ENCODE measurements at regions of chr17 and their contacts with region 1.

Region 1: DNA sequence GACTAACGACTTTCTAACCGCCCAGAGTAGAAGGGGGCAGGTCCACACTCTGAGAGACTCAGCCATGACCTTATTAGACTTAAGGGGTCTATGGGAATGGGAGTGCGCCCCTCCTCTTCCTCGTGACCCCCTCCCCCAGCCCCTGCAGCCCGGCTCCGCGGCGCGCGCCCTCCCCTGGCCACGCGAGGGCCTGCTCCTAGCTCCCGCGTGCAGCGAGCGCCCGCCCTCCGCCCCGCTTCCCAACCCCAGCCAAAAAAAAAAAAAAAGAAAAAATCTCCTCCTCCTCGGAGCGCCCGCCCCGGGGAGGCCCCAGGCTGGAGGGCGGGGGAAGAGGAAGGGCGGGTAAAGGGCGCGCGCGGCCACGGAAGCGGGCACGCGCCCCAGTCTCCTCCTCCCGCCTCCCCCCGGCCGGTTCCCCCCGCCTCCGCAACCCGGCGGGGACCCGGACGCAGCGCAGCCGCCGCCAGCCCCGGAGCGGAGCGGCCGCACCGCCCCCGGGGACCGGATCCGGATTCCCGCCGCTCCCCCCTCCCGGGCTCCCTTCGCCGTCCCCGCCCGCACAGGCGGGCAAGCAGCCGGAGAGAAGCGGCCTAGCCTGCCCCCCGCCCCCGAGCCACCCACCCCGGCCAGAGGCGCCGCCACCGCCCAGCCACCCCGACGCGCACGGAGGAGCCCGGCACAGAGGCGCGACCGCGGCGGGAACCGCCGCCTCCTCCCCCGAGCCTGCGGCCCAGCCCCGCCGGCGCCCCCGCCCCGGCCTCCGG is 949 bp downstream of the UBTF start:
- DNase-seq: peak; percentile 71 to 96 (median 87)
- ATAC-seq: peak; percentile 55
- H3K4me3 ChIP-seq: peak overlapping the region; percentile 65 to 73
- H3K4me3 Mint-ChIP-seq: peak overlapping the region; percentile 74
- H3K27ac ChIP-seq: peak overlapping the region; percentile 46 to 78
- H3K27ac Mint-ChIP-seq: peak overlapping the region; percentile 96
- H3K4me1 ChIP-seq: peaks cover 56% of the 10 kb centered on the region
- H3K4me1 Mint-ChIP-seq: peaks cover 52% of the 10 kb centered on the region
- H3K27me3 ChIP-seq: no peaks in the 10 kb centered on the region
- H3K27me3 Mint-ChIP-seq: no peaks in the 10 kb centered on the region
- CTCF ChIP-seq: peak; percentile 53

Region 2: DNA sequence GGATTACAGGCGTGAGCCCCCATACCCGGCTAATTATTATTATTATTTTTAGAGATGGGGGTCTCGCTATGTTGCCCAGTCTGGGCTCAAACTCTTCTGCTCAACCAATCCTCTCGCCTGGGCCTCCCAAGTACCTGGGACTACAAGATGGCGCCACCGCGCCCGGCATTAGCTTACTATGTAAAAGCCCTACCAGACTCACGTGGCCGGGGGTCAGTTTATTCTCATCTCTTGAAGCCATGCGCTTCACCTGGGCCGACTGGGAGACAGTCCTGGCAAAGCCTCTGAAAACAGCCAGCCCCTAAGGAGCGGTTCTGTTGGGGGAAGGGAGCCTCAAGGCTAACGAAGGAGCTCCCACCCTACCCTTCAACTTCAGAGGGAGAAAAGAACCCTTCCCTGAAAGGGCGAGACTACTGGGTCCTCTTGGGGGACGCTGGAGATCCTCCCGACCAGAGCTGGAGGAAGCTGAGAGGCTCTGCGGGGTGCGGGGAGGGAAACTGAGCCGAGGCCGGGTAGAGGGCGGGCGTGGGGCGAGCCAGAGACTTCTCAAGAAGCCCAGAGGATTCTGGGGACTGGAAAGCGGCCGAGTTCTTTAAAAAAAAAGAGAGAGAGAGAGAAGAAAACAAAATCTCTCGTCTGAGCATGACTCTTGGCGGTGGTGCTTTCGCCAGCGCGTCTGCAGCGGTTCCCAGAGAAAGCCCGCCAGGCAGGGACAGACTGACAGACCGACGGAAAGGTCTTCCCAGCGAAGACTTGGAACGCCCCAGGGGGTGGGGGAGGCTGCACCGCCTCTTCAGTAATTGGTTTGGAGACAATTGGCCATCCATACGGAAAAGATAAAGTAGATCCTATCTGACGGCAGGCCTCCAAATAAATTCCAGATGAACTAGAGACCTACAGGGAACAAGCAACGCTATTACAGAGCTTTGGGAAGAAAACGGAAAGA is 1565.1 kb before region 1 on chr17:
- CTCF ChIA-PET with region 1: no interaction called
- POLR2A ChIA-PET with region 1: no interaction called
- intact Hi-C with region 1: no loop called
- DNase-seq: no peak
- ATAC-seq: no peak
- H3K4me3 ChIP-seq: no peak overlapping the region
- H3K4me3 Mint-ChIP-seq: no peak overlapping the region
- H3K27ac ChIP-seq: no peak overlapping the region
- H3K27ac Mint-ChIP-seq: no peak overlapping the region
- H3K4me1 ChIP-seq: no peaks in the 10 kb centered on the region
- H3K4me1 Mint-ChIP-seq: peaks cover 8% of the 10 kb centered on the region
- H3K27me3 ChIP-seq: no peaks in the 10 kb centered on the region
- H3K27me3 Mint-ChIP-seq: peaks cover 21% of the 10 kb centered on the region
- CTCF ChIP-seq: no peak

Region 3: GRCh38 chr17:44053125-44053872 is 165.2 kb before region 1 on chr17:
- CTCF ChIA-PET with region 1: no interaction called
- POLR2A ChIA-PET with region 1: no interaction called
- intact Hi-C with region 1: no loop called
- DNase-seq: no peak
- ATAC-seq: no peak
- H3K4me3 ChIP-seq: no peak overlapping the region
- H3K4me3 Mint-ChIP-seq: no peak overlapping the region
- H3K27ac ChIP-seq: no peak overlapping the region
- H3K27ac Mint-ChIP-seq: peak overlapping the region; percentile 45
- H3K4me1 ChIP-seq: no peaks in the 10 kb centered on the region
- H3K4me1 Mint-ChIP-seq: peaks cover 23% of the 10 kb centered on the region
- H3K27me3 ChIP-seq: no peaks in the 10 kb centered on the region
- H3K27me3 Mint-ChIP-seq: no peaks in the 10 kb centered on the region
- CTCF ChIP-seq: no peak

Region 4: DNA sequence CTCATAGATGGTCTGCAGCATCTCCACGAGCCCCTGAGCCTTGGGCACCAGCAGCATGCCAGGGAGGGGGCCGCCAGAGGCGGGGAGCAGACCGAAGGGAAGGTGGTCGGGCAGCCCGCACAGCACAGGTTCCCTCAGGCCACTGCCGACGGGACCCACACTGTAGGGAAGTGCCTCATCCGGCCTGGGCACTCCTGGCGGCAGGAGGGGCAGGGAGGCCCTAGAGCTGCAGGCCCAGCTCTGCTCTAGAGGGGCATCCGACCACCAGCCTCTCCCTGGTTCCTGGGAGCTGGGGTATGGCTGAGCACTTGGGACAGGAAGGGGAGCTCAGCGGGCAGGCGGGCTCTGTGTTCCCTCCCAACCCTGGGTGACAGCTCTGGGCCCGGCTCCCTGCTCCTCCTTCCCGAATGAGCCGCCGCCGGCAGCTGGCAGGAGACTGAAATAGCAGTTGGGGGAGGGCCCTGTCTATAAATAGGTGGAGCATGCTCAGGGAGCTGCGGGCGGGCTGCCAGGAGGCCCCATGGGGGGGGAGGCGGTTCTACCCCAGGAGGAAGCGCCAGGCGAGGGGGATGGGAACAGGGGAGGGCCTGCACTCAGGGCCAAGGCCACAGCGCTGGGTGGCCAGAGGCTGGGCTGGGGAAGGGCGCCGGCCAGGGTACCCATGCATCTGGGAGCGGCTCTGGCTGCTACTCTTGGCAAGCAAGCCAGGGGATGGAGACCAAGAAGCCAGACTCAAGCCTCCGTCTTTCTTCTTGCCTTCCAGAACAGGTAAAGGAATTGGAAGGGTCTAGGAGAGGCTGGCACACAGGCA is 107.5 kb before region 1 on chr17:
- CTCF ChIA-PET with region 1: no interaction called
- POLR2A ChIA-PET with region 1: no interaction called
- intact Hi-C with region 1: no loop called
- DNase-seq: peak; percentile 16 to 81 (median 62)
- ATAC-seq: peak; percentile 74
- H3K4me3 ChIP-seq: peak overlapping the region; percentile 2 to 35
- H3K4me3 Mint-ChIP-seq: peak overlapping the region; percentile 51
- H3K27ac ChIP-seq: no peak overlapping the region
- H3K27ac Mint-ChIP-seq: no peak overlapping the region
- H3K4me1 ChIP-seq: peaks cover 28% of the 10 kb centered on the region
- H3K4me1 Mint-ChIP-seq: peaks cover 31% of the 10 kb centered on the region
- H3K27me3 ChIP-seq: no peaks in the 10 kb centered on the region
- H3K27me3 Mint-ChIP-seq: no peaks in the 10 kb centered on the region
- CTCF ChIP-seq: no peak

Region 5: DNA sequence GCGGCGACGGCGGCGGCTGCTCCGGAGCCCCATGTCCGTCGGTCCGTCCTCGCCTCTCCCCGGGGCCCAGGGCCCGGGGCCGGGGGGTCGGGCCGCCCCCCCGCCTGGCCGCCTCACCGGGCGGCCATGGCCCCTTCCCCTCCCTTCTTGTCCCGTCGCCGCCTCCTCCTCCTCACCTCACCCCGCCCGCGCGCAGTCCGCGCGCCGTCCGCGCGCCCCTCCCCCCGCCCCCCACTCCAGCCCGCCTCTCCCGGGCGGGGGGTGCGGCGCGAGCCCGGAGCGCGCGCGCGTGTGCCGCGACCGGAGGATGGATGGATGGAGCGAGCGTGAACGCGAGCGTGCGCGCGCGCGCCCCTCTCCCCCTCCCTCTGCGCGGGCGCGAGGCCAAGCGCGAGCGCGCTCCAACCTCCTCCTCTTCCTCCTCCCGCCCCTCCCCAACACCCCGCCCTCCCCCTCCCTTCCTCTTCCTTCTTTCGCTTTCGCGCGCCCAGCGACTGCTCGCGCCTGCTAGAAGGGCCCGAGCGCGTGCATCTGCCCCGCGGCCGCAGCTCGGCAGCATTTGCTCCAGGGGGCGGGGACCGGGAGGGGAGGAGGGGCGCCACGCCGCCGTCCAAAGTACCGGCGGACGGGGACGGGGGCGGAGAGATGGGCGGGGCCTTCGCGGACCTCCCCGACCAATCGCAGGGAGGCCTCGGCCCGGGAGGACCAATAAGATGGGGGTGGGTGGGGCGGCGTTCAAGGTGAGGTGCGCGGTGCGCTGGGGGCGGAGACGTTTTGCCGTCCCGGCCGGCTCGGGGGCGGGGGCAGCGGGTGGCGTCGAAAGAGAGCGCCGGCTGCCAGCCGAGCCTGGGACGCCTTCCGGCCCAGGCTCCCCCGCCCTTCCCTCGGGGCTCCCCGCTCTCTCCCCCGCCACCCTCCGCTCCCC is 18.7 kb before region 1 on chr17 and contains the start of gene ATXN7L3:
- CTCF ChIA-PET with region 1: interaction called, 95 read pairs
- POLR2A ChIA-PET with region 1: interaction called, 251 read pairs
- intact Hi-C with region 1: loop called (anchors 1 kb)
- DNase-seq: peak; percentile 99 to 100 (median 99)
- ATAC-seq: peak; percentile 84
- H3K4me3 ChIP-seq: peak within 1 kb of the TSS; percentile 84 to 96
- H3K4me3 Mint-ChIP-seq: peak within 1 kb of the TSS; percentile 86
- H3K27ac ChIP-seq: peak within 1 kb of the TSS; percentile 69 to 92
- H3K27ac Mint-ChIP-seq: peak within 1 kb of the TSS; percentile 93
- H3K4me1 ChIP-seq: peaks cover 36% of the 10 kb centered on the region
- H3K4me1 Mint-ChIP-seq: peaks cover 43% of the 10 kb centered on the region
- H3K27me3 ChIP-seq: no peaks in the 10 kb centered on the region
- H3K27me3 Mint-ChIP-seq: no peaks in the 10 kb centered on the region
- CTCF ChIP-seq: no peak
- total RNA-seq, gene ATXN7L3: 85.5 to 85.7 TPM

Region 6: DNA sequence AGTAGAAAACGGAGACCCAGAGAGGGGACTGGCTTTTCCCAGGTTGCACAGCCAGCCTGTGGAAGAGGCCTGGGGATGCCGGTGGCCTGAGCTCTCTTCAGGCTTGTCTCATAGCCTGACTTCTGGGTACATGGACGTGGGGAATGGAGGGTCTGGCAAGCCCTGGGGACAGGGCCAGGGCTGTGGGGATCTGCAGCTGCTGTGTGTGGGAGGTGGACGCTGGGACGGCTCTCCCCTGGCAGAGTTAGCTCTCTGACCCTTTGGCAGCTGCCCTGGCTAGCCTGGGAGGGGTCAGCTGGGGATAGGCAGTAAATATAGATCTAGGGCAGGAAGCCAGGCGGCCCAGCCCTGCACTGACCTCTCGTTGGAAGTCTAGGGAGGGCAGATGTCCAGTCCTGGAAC is 28.9 kb after region 1 on chr17:
- CTCF ChIA-PET with region 1: interaction called, 5 read pairs
- POLR2A ChIA-PET with region 1: interaction called, 32 read pairs
- intact Hi-C with region 1: loop called in 1 of 2 experiments (anchors 5 kb)
- DNase-seq: no peak
- ATAC-seq: no peak
- H3K4me3 ChIP-seq: no peak overlapping the region
- H3K4me3 Mint-ChIP-seq: peak overlapping the region; percentile 29
- H3K27ac ChIP-seq: no peak overlapping the region
- H3K27ac Mint-ChIP-seq: peak overlapping the region; percentile 76
- H3K4me1 ChIP-seq: peaks cover 47% of the 10 kb centered on the region
- H3K4me1 Mint-ChIP-seq: peaks cover 45% of the 10 kb centered on the region
- H3K27me3 ChIP-seq: no peaks in the 10 kb centered on the region
- H3K27me3 Mint-ChIP-seq: no peaks in the 10 kb centered on the region
- CTCF ChIP-seq: no peak

Region 7: DNA sequence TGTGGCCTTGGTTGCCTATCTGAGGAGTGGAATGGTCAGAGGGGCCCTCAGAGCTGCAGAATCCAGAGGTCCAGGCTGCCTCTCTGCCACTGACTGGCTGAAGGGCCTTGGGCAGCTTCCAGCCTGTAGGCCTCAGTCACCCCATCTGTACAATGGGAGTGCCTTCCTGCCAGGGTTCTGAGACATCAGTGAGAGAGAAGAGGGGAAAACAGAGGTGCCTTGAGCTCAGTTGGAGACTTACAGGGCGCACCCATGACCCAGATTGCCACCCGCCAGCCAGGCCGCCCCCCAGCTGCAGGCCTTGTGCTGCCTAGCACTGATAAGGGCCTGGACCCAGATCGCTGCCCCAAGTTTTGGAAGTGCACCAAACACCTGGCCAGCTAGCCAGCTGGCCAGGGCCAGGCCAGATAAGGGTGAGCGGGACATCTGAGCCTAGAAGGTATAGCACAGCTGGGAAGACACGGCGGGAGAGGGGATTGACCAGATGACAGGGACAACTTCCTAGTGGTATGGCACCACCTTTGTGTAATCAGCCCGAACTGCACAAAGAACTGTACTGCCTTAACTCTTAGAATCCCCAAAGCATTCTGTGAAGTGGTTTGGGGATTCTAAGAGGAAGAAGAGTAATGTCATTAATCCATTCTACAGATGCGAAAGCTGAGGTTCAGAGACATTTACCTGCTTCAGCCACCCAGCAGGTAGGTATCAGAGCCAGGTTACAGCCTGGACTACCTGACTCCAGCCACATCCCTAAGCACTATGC is 48.1 kb after region 1 on chr17:
- CTCF ChIA-PET with region 1: no interaction called
- POLR2A ChIA-PET with region 1: interaction called, 3 read pairs
- intact Hi-C with region 1: loop called in 1 of 2 experiments (anchors 10 kb)
- DNase-seq: no peak
- ATAC-seq: no peak
- H3K4me3 ChIP-seq: no peak overlapping the region
- H3K4me3 Mint-ChIP-seq: no peak overlapping the region
- H3K27ac ChIP-seq: no peak overlapping the region
- H3K27ac Mint-ChIP-seq: no peak overlapping the region
- H3K4me1 ChIP-seq: no peaks in the 10 kb centered on the region
- H3K4me1 Mint-ChIP-seq: no peaks in the 10 kb centered on the region
- H3K27me3 ChIP-seq: no peaks in the 10 kb centered on the region
- H3K27me3 Mint-ChIP-seq: no peaks in the 10 kb centered on the region
- CTCF ChIP-seq: no peak

Region 8: DNA sequence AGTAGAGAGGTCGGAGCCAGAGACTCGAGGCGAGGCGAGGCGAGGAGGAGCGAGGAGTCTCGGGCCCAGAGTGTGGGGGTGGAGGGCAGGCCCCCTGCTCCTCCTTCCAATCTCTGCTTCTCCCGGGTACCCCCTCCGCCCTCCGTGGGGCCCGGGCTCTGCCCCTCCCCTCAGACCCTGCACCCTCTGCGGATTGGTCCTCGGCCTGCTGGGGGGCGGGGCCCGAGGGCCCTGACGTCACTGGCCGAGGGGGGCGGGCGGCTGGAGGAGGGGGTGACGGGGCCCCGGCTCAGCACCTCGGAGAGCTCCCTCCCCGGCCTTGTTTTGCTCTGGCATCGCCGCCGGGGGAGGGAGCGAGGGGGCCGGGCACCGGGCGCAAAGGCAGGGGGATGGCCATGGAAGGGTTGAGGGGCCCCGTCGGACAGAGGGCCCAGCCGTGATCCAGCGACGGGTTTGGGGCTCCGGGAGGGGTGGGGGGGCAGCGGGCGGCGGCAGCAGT is 89.8 kb after region 1 on chr17 and contains the start of gene RUNDC3A:
- CTCF ChIA-PET with region 1: no interaction called
- POLR2A ChIA-PET with region 1: interaction called, 9 read pairs
- intact Hi-C with region 1: loop called in 1 of 2 experiments (anchors 1 kb)
- DNase-seq: peak; percentile 78 to 92 (median 87)
- ATAC-seq: peak; percentile 94
- H3K4me3 ChIP-seq: peak within 1 kb of the TSS; percentile 33 to 41
- H3K4me3 Mint-ChIP-seq: peak within 1 kb of the TSS; percentile 62
- H3K27ac ChIP-seq: no peak within 1 kb of the TSS
- H3K27ac Mint-ChIP-seq: no peak within 1 kb of the TSS
- H3K4me1 ChIP-seq: peaks cover 14% of the 10 kb centered on the region
- H3K4me1 Mint-ChIP-seq: peaks cover 19% of the 10 kb centered on the region
- H3K27me3 ChIP-seq: peaks cover 4 to 10% of the 10 kb centered on the region in 2 experiments
- H3K27me3 Mint-ChIP-seq: peaks cover 36% of the 10 kb centered on the region
- CTCF ChIP-seq: no peak
- total RNA-seq, gene RUNDC3A: 0.19 TPM in 1 of 2 experiments, not detected in the other

Region 9: GRCh38 chr17:44324571-44325275 is 106.2 kb after region 1 on chr17 and contains the start of gene SLC25A39:
- CTCF ChIA-PET with region 1: interaction called, 161 read pairs
- POLR2A ChIA-PET with region 1: interaction called, 41 read pairs
- intact Hi-C with region 1: loop called (anchors 1 kb)
- DNase-seq: peak; percentile 90 to 98 (median 96)
- ATAC-seq: peak; percentile 72
- H3K4me3 ChIP-seq: peak within 1 kb of the TSS; percentile 84 to 91
- H3K4me3 Mint-ChIP-seq: peak within 1 kb of the TSS; percentile 88
- H3K27ac ChIP-seq: peak within 1 kb of the TSS; percentile 88 to 93
- H3K27ac Mint-ChIP-seq: peak within 1 kb of the TSS; percentile 96
- H3K4me1 ChIP-seq: peaks cover 14% of the 10 kb centered on the region
- H3K4me1 Mint-ChIP-seq: peaks cover 30% of the 10 kb centered on the region
- H3K27me3 ChIP-seq: no peaks in the 10 kb centered on the region
- H3K27me3 Mint-ChIP-seq: no peaks in the 10 kb centered on the region
- CTCF ChIP-seq: no peak
- total RNA-seq, gene SLC25A39: 73.1 to 77.7 TPM

Region 10: GRCh38 chr17:44331249-44331760 is 112.8 kb after region 1 on chr17:
- CTCF ChIA-PET with region 1: interaction called, 161 read pairs
- POLR2A ChIA-PET with region 1: interaction called, 41 read pairs
- intact Hi-C with region 1: loop called in 1 of 2 experiments (anchors 1 kb)
- DNase-seq: peak; percentile 45 to 85 (median 75)
- ATAC-seq: no peak
- H3K4me3 ChIP-seq: no peak overlapping the region
- H3K4me3 Mint-ChIP-seq: no peak overlapping the region
- H3K27ac ChIP-seq: no peak overlapping the region
- H3K27ac Mint-ChIP-seq: no peak overlapping the region
- H3K4me1 ChIP-seq: peaks cover 4% of the 10 kb centered on the region
- H3K4me1 Mint-ChIP-seq: peaks cover 12% of the 10 kb centered on the region
- H3K27me3 ChIP-seq: no peaks in the 10 kb centered on the region
- H3K27me3 Mint-ChIP-seq: no peaks in the 10 kb centered on the region
- CTCF ChIP-seq: peak; percentile 89

Region 11: GRCh38 chr17:44409314-44410028 is 190.9 kb after region 1 on chr17:
- CTCF ChIA-PET with region 1: no interaction called
- POLR2A ChIA-PET with region 1: no interaction called
- intact Hi-C with region 1: no loop called
- DNase-seq: no peak
- ATAC-seq: no peak
- H3K4me3 ChIP-seq: no peak overlapping the region
- H3K4me3 Mint-ChIP-seq: no peak overlapping the region
- H3K27ac ChIP-seq: no peak overlapping the region
- H3K27ac Mint-ChIP-seq: no peak overlapping the region
- H3K4me1 ChIP-seq: no peaks in the 10 kb centered on the region
- H3K4me1 Mint-ChIP-seq: no peaks in the 10 kb centered on the region
- H3K27me3 ChIP-seq: no peaks in the 10 kb centered on the region
- H3K27me3 Mint-ChIP-seq: no peaks in the 10 kb centered on the region
- CTCF ChIP-seq: no peak

Measured in CD8-positive, alpha-beta T cell (primary cell).